ENCODE measurements at regions of chr1 and their contacts with region 1.

Region 1: GRCh38 chr1:24502709-24503058 is at the start of gene RCAN3:
- DNase-seq: peak; percentile 73 to 93 (median 86)
- ATAC-seq: peak; percentile 68 to 81 (median 75)
- H3K4me3 ChIP-seq: peak within 1 kb of the TSS; percentile 81 to 91
- H3K4me3 Mint-ChIP-seq: peak within 1 kb of the TSS; percentile 99 to 100 (median 99)
- H3K27ac ChIP-seq: peak within 1 kb of the TSS; percentile 98
- H3K27ac Mint-ChIP-seq: peak within 1 kb of the TSS; percentile 92 to 99
- H3K4me1 ChIP-seq: peaks cover 39 to 59% of the 10 kb centered on the region in 2 experiments
- H3K4me1 Mint-ChIP-seq: peaks cover 66 to 77% (median 74%) of the 10 kb centered on the region in 3 donors
- H3K27me3 ChIP-seq: no peaks in the 10 kb centered on the region
- H3K27me3 Mint-ChIP-seq: peaks cover 0 to 2% of the 10 kb centered on the region in 2 donors
- total RNA-seq, gene RCAN3: 149 to 202 (median 186) TPM

Region 2: DNA sequence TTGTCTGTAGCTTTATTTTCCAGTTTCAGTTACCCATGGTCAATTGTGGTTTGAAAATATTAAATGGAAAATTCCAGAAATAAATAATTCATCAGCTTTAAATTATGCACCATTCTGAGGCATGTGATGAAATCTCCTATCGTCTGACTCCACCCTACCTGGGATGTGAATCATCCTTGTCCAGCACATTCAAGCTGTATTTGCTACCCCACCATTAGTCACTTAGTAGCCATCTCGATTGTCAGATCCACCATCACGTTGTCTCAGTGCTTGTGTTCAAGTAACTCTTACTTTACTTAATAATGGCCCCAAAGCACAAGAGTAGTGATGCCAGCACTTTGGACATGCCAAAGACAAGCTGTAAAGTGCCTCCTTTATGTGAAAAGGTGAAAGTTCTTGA is 93.1 kb before region 1 on chr1:
- CTCF ChIA-PET with region 1: interaction called, 3 to 29 read pairs
- POLR2A ChIA-PET with region 1: interaction called, 4 to 13 read pairs
- DNase-seq: no peak
- ATAC-seq: no peak
- H3K4me3 ChIP-seq: no peak overlapping the region
- H3K4me3 Mint-ChIP-seq: no peak overlapping the region
- H3K27ac ChIP-seq: no peak overlapping the region
- H3K27ac Mint-ChIP-seq: no peak overlapping the region
- H3K4me1 ChIP-seq: peaks cover 8 to 14% of the 10 kb centered on the region in 2 experiments
- H3K4me1 Mint-ChIP-seq: peaks cover 19 to 23% (median 21%) of the 10 kb centered on the region in 3 donors
- H3K27me3 ChIP-seq: no peaks in the 10 kb centered on the region
- H3K27me3 Mint-ChIP-seq: no peaks in the 10 kb centered on the region

Region 3: DNA sequence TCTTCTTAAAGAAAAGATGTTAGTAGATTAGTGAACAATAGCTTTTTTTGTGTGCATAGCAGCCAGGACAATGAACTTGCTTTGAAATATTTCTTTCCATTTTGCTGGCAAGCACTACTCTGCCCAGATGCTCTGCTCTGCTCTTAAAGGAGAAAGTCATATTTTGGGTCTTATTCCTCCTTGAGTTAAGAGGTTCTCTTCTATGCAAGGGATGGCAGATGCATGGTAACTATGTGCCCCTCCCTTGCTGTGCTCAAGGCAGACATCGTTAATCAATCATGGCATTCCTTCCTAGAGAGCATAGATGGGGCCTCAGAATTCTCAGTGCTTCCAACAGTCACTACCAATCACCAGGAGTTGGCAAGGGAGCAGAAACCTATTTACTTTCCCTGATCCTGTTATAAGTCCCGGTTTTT is 59.4 kb before region 1 on chr1:
- CTCF ChIA-PET with region 1: no interaction called
- POLR2A ChIA-PET with region 1: interaction called in 1 of 2 experiments, 32 read pairs
- DNase-seq: no peak
- ATAC-seq: no peak
- H3K4me3 ChIP-seq: no peak overlapping the region
- H3K4me3 Mint-ChIP-seq: no peak overlapping the region
- H3K27ac ChIP-seq: no peak overlapping the region
- H3K27ac Mint-ChIP-seq: no peak overlapping the region
- H3K4me1 ChIP-seq: peaks cover 0 to 4% of the 10 kb centered on the region in 2 experiments
- H3K4me1 Mint-ChIP-seq: peaks cover 8 to 17% (median 11%) of the 10 kb centered on the region in 3 donors
- H3K27me3 ChIP-seq: no peaks in the 10 kb centered on the region
- H3K27me3 Mint-ChIP-seq: no peaks in the 10 kb centered on the region

Region 4: DNA sequence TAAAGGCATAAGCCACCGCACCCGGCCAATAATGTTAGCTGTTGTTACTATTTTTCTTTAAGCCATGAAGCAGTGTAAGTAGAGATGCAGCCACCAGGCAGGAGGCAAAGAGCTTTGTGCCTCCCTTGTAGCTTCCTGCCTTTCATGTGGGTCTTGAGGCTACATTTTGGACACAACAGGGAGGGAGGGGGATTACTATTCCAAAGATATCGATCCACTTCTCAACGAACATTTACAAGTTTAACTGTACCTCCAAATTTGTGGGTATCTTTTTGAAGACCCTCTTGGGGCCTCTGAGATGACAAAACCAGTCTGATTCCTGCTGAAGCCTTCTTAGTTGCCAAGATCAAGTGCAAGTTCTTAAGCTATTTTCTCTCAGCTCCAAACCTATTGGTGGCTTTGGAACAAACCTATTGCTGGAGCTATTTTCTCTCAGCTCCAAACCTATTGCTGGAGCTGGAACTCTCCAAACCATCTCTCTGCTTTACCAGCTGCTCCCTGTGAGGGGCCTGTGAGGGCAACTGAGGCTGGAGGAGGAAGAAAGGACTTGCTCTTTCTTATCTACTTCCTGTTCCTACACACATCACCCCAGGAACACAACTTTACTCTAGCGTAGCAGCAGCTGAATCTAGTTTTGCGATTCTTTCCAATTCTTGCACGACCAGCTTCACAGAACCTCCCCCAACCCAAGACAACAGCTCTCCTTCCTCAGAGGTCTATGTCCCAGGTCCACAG is 16.2 kb before region 1 on chr1:
- CTCF ChIA-PET with region 1: interaction called, 4 to 11 read pairs
- POLR2A ChIA-PET with region 1: interaction called, 5 to 30 read pairs
- DNase-seq: peak in 21 of 35 experiments; percentile 15 to 78 (median 42)
- ATAC-seq: peak; percentile 63 to 73 (median 68)
- H3K4me3 ChIP-seq: peak overlapping the region in 1 of 2 donors; percentile 0
- H3K4me3 Mint-ChIP-seq: peak overlapping the region; percentile 37 to 70 (median 64)
- H3K27ac ChIP-seq: peak overlapping the region; percentile 71
- H3K27ac Mint-ChIP-seq: peak overlapping the region; percentile 90 to 98
- H3K4me1 ChIP-seq: peaks cover 57 to 76% of the 10 kb centered on the region in 2 experiments
- H3K4me1 Mint-ChIP-seq: peaks cover 77 to 79% (median 77%) of the 10 kb centered on the region in 3 donors
- H3K27me3 ChIP-seq: peaks cover 0 to 3% of the 10 kb centered on the region in 2 experiments
- H3K27me3 Mint-ChIP-seq: no peaks in the 10 kb centered on the region

Region 5: GRCh38 chr1:24536391-24536840 is 33.7 kb after region 1 on chr1:
- CTCF ChIA-PET with region 1: interaction called in 1 of 2 experiments, 8 read pairs
- POLR2A ChIA-PET with region 1: interaction called, 3 to 18 read pairs
- DNase-seq: peak; percentile 14 to 93 (median 82)
- ATAC-seq: peak; percentile 50 to 84 (median 54)
- H3K4me3 ChIP-seq: no peak overlapping the region
- H3K4me3 Mint-ChIP-seq: peak overlapping the region; percentile 79 to 83 (median 81)
- H3K27ac ChIP-seq: peak overlapping the region; percentile 98
- H3K27ac Mint-ChIP-seq: peak overlapping the region; percentile 99
- H3K4me1 ChIP-seq: peaks cover 23 to 38% of the 10 kb centered on the region in 2 experiments
- H3K4me1 Mint-ChIP-seq: peaks cover 73 to 86% (median 81%) of the 10 kb centered on the region in 3 donors
- H3K27me3 ChIP-seq: no peaks in the 10 kb centered on the region
- H3K27me3 Mint-ChIP-seq: no peaks in the 10 kb centered on the region

Region 6: DNA sequence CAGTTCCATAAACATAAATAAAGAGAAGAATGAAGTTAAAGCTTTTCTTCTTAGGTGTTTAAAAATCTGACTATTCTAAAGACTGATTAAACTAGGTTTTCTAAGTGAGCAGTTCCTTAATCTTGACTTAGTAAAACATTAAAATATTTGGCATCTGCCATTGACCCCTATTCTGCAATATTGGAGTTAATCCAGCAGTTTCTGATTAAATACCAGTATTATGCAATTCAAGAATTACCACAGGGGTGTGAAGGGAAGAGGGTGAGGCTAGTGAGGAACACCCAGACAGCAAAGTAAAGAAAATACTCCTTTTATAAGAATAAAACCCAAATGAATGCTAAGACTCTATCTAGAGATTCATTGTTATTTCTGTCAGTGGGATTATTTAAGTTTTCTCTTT is 283.5 kb after region 1 on chr1:
- CTCF ChIA-PET with region 1: no interaction called
- POLR2A ChIA-PET with region 1: no interaction called
- DNase-seq: no peak
- ATAC-seq: no peak
- H3K4me3 ChIP-seq: no peak overlapping the region
- H3K4me3 Mint-ChIP-seq: no peak overlapping the region
- H3K27ac ChIP-seq: no peak overlapping the region
- H3K27ac Mint-ChIP-seq: no peak overlapping the region
- H3K4me1 ChIP-seq: no peaks in the 10 kb centered on the region
- H3K4me1 Mint-ChIP-seq: no peaks in the 10 kb centered on the region
- H3K27me3 ChIP-seq: no peaks in the 10 kb centered on the region
- H3K27me3 Mint-ChIP-seq: peaks cover 0 to 2% of the 10 kb centered on the region in 2 donors

Region 7: DNA sequence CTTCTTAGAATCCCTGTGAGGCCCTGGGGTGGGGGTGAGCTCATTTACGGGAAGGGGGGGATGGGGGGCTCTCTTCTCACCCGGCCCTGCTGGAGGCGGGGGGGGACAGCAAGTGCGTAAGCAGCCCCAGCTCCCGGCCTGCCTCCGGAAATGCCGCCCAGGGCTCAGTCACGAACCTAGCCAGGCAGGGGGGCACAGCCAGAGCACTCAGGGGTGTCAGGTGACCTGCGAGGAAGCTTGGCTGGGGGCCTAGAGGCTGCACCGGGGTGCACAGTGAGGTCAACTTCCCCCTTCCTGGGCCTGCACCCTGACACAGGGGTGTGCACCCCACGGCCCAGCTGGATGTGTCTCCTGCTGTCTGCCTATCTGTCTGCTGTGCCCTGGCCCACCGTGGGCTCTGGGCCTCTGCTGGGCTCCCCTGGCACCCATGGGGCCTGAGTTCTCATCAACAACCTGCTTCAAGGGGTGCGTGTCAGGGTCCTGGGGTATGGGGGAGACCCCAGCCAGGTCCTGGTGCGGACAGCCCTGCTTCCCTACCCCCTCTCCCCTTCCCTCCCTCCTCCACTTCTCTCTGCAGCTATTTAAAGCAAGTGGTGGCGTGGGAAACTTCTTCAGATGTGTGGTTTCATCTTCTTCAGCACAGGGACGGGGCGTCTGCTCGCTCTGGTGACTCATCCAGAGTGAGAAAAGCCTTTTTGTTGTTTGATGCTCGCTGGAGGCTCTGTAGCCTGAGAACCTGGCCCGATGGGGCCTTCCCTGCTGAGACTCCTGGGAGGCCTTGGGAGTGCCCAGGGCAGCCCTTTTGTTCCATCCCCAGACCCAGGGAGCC is 519.9 kb after region 1 on chr1:
- CTCF ChIA-PET with region 1: no interaction called
- POLR2A ChIA-PET with region 1: no interaction called
- DNase-seq: peak; percentile 79 to 99 (median 96)
- ATAC-seq: peak; percentile 87 to 90 (median 88)
- H3K4me3 ChIP-seq: peak overlapping the region; percentile 39 to 41
- H3K4me3 Mint-ChIP-seq: peak overlapping the region; percentile 67 to 77 (median 70)
- H3K27ac ChIP-seq: peak overlapping the region; percentile 100
- H3K27ac Mint-ChIP-seq: peak overlapping the region; percentile 95 to 98
- H3K4me1 ChIP-seq: peaks cover 41 to 100% of the 10 kb centered on the region in 2 experiments
- H3K4me1 Mint-ChIP-seq: peaks cover 72 to 89% (median 89%) of the 10 kb centered on the region in 3 donors
- H3K27me3 ChIP-seq: no peaks in the 10 kb centered on the region
- H3K27me3 Mint-ChIP-seq: no peaks in the 10 kb centered on the region

Measured in T-cell (primary cell).